Activated naive CD4-positive, alpha-beta T cell treated with anti-CD3 and anti-CD28 coated beads for 36 hours (primary cell): ENCODE measurements at regions of chr6 and their contacts with region 1.

Region 1: GRCh38 chr6:116773886-116774285 is 8.4 kb upstream of the FAM162B start:
- DNase-seq: no peak
- H3K4me3 Mint-ChIP-seq: no peak overlapping the region
- H3K27ac Mint-ChIP-seq: no peak overlapping the region
- H3K4me1 Mint-ChIP-seq: no peaks in the 10 kb centered on the region
- H3K27me3 Mint-ChIP-seq: peaks cover 7% of the 10 kb centered on the region

Region 2: GRCh38 chr6:116615937-116616736 is 157.7 kb before region 1 on chr6 and contains the start of gene RSPH4A:
- CTCF ChIA-PET with region 1: no interaction called
- intact Hi-C with region 1: loop called (anchors 5 kb)
- DNase-seq: peak; percentile 85
- H3K4me3 Mint-ChIP-seq: peak within 1 kb of the TSS; percentile 82
- H3K27ac Mint-ChIP-seq: no peak within 1 kb of the TSS
- H3K4me1 Mint-ChIP-seq: peaks cover 12% of the 10 kb centered on the region
- H3K27me3 Mint-ChIP-seq: peaks cover 11% of the 10 kb centered on the region
- total RNA-seq, gene RSPH4A: not detected